ENCODE measurements at regions of chr14 and their contacts with region 1.

Region 1: GRCh38 chr14:92568621-92569479 is 55.3 kb downstream of the RIN3 start:
- DNase-seq: peak; percentile 34
- ATAC-seq: peak; percentile 84
- H3K4me3 Mint-ChIP-seq: peak overlapping the region; percentile 67
- H3K27ac Mint-ChIP-seq: peak overlapping the region; percentile 95
- H3K4me1 Mint-ChIP-seq: peaks cover 36% of the 10 kb centered on the region
- H3K27me3 Mint-ChIP-seq: no peaks in the 10 kb centered on the region
- CTCF ChIP-seq: no peak

Region 2: DNA sequence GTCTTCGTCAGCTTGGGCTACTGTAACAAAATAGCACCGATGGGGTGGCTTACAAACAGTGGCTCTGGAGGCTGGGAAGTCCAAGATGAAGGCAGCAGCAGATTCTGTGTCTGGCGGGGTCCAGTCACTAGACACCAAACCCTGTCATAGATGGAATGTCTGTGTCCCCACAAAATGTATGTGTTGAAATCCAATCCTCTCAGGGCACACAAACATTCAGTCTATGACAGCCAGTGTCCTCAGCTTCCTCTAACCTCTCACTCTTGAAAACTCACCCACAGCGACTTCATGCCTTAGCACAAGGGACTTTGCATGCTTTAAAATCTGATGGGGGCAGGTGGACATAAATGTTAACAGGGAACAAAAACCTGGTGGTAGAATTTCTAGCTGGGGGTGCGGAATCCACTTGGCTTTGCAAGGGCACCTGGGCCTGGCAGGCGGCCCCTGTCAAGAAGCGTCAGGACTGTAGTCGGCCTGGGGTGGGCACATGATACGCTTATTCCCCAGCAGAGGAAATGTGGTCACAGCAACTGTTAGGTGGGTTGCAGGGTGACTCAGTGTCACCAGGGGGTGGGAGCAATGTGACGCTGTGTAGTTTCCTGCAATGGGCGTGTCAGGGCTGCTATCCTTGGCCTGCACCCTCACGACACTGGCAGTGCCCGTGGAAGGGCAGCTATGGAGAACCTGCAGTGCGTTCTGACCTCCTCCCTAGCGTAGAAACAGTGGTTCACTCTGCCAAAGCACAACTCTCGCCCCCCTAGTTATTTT is 37.6 kb before region 1 on chr14:
- CTCF ChIA-PET with region 1: no interaction called
- POLR2A ChIA-PET with region 1: interaction called, 10 read pairs
- intact Hi-C with region 1: no loop called
- DNase-seq: peak; percentile 41
- ATAC-seq: peak; percentile 89
- H3K4me3 Mint-ChIP-seq: peak overlapping the region; percentile 9
- H3K27ac Mint-ChIP-seq: peak overlapping the region; percentile 87
- H3K4me1 Mint-ChIP-seq: peaks cover 47% of the 10 kb centered on the region
- H3K27me3 Mint-ChIP-seq: no peaks in the 10 kb centered on the region
- CTCF ChIP-seq: no peak

Region 3: DNA sequence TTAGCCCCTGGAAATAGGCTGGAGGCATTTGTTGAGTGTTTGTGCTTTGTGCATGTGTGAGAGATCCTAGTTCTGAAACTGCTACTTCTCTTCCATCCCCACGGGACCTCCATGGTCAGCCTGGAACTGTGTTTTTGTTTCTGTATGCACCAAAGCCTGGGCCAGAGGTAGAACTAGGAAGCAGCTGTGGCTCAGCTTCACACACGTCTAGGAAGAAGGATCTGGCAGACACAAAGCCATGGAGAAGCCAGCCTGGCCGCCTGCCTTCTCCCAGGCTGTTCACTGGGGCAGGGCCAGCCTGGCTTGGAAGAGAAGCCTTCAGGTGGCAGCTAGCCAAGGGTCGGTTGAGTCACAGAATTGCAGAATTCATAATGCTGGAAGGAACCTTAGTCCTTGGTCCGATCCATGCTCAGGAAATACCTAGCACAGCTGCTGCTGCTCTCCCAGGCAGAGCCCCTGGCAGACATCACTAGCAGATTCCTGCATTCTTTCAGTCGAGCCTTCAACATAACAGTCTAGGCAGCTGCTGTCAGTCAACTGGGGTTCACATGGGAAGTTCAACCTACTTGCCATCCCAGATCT is 28.3 kb before region 1 on chr14:
- CTCF ChIA-PET with region 1: no interaction called
- POLR2A ChIA-PET with region 1: interaction called, 20 read pairs
- intact Hi-C with region 1: no loop called
- DNase-seq: no peak
- ATAC-seq: no peak
- H3K4me3 Mint-ChIP-seq: no peak overlapping the region
- H3K27ac Mint-ChIP-seq: no peak overlapping the region
- H3K4me1 Mint-ChIP-seq: peaks cover 45% of the 10 kb centered on the region
- H3K27me3 Mint-ChIP-seq: no peaks in the 10 kb centered on the region
- CTCF ChIP-seq: no peak

Region 4: GRCh38 chr14:92551044-92551841 is 17.6 kb before region 1 on chr14:
- CTCF ChIA-PET with region 1: interaction called, 3 read pairs
- POLR2A ChIA-PET with region 1: interaction called, 5 read pairs
- intact Hi-C with region 1: loop called (anchors 2 kb)
- DNase-seq: no peak
- ATAC-seq: peak; percentile 78
- H3K4me3 Mint-ChIP-seq: peak overlapping the region; percentile 55
- H3K27ac Mint-ChIP-seq: no peak overlapping the region
- H3K4me1 Mint-ChIP-seq: peaks cover 44% of the 10 kb centered on the region
- H3K27me3 Mint-ChIP-seq: peaks cover 7% of the 10 kb centered on the region
- CTCF ChIP-seq: no peak

Measured in activated B cell treated with CpG ODN at 0.5 μM for 24 hours (primary cell).